Activated CD8-positive, alpha-beta T cell treated with anti-CD3 and anti-CD28 coated beads for 36 hours (primary cell): ENCODE measurements at regions of chr4 and their contacts with region 1.

Region 1: DNA sequence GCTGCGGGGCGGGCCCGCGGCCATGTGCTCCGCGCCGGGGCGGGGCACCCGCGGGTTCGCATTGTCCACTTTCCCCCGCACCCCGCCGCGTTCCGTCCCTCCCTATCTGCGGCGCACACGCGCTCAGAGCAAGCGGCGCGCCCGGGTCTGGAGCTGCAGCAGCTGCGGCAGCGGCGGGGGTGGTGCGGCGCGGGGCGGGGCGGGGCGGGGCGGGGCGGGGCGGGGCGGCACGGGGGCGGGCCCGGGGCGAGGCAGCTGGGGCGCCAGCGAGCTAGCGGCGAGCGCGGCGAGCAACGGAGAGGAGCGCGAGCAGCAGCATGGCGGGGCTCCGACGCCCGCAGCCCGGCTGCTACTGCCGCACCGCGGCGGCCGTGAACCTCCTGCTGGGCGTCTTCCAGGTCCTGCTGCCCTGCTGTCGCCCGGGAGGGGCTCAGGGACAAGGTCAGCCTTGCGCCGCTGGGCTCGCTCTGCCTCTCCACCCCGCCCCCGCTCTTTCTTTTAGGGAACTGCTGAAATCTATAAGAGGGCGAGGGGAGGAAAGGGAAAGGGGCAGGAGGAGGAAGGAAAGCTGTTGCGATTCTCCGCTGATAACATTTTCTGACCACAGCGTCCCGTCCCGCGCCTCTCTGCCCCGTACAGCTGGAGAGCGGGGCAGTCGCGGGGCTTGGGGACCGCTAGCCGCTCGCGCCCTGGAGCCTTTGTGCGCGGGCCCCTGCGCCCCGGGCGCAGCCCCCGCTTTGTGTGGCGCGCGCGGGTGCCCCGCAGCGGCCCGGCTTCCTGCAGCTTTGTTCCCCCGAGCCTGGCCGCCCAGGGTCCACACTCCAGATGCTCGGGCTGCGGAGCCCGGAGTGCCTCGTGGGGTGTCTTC is at the start of gene TMEM131L:
- DNase-seq: peak; percentile 64
- ATAC-seq: peak; percentile 70
- H3K4me3 Mint-ChIP-seq: peak within 1 kb of the TSS; percentile 98
- H3K27ac Mint-ChIP-seq: peak within 1 kb of the TSS; percentile 88
- H3K4me1 Mint-ChIP-seq: peaks cover 31% of the 10 kb centered on the region
- H3K27me3 Mint-ChIP-seq: no peaks in the 10 kb centered on the region
- CTCF ChIP-seq: no peak
- total RNA-seq, gene TMEM131L: 51.7 to 52.4 TPM

Region 2: GRCh38 chr4:153344131-153345010 is 121.9 kb before region 1 on chr4 and contains the start of gene MND1:
- CTCF ChIA-PET with region 1: interaction called, 26 read pairs
- POLR2A ChIA-PET with region 1: interaction called, 5 read pairs
- intact Hi-C with region 1: no loop called
- DNase-seq: peak; percentile 94
- ATAC-seq: peak; percentile 94
- H3K4me3 Mint-ChIP-seq: peak within 1 kb of the TSS; percentile 93
- H3K27ac Mint-ChIP-seq: peak within 1 kb of the TSS; percentile 87
- H3K4me1 Mint-ChIP-seq: peaks cover 24% of the 10 kb centered on the region
- H3K27me3 Mint-ChIP-seq: peaks cover 12% of the 10 kb centered on the region
- CTCF ChIP-seq: peak; percentile 100
- total RNA-seq, gene MND1: 48.0 to 50.0 TPM

Region 3: DNA sequence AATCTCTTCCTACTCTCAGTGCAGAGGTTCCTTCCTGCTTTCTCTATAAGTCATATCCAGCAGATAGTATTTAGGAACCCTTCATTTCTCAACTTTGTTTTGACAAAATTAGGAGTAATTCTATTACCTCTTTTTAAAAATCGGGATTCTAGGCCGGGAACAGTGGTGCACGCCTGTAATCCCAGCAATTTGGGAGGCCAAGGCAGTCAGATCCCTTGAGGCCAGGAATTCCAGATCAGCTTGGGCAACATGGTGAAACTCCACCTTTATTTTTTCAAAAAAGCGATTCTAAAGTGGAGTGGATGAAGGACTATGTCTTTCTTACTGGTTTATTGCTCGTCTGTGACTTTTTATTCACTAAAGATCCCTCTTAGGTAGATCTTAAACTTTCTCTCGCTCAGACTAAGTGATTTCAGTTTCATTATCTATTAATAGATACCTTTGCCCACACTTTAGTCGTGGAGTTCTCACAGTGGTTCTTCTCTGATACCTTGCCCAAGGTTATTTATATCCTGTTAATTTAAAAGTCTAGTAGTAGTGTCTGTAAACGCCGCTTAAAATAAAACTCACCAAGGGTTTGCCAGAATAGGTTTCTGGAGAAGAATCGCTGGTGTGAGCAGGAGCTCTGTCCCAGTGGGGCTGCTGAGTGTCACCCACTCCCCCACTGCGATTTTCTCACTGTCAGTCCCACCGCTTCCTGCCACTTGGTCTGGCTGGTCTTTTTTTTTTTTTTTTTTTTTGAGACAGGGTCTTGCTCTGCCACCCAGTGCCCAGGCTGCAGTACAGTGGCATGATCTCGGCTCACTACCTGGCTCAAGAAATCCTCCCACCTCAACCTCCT is 27.2 kb before region 1 on chr4:
- CTCF ChIA-PET with region 1: interaction called, 23 read pairs
- POLR2A ChIA-PET with region 1: interaction called, 10 read pairs
- intact Hi-C with region 1: loop called (anchors 5 kb)
- DNase-seq: peak; percentile 57
- ATAC-seq: peak; percentile 83
- H3K4me3 Mint-ChIP-seq: peak overlapping the region; percentile 80
- H3K27ac Mint-ChIP-seq: peak overlapping the region; percentile 92
- H3K4me1 Mint-ChIP-seq: peaks cover 50% of the 10 kb centered on the region
- H3K27me3 Mint-ChIP-seq: no peaks in the 10 kb centered on the region
- CTCF ChIP-seq: no peak

Region 4: DNA sequence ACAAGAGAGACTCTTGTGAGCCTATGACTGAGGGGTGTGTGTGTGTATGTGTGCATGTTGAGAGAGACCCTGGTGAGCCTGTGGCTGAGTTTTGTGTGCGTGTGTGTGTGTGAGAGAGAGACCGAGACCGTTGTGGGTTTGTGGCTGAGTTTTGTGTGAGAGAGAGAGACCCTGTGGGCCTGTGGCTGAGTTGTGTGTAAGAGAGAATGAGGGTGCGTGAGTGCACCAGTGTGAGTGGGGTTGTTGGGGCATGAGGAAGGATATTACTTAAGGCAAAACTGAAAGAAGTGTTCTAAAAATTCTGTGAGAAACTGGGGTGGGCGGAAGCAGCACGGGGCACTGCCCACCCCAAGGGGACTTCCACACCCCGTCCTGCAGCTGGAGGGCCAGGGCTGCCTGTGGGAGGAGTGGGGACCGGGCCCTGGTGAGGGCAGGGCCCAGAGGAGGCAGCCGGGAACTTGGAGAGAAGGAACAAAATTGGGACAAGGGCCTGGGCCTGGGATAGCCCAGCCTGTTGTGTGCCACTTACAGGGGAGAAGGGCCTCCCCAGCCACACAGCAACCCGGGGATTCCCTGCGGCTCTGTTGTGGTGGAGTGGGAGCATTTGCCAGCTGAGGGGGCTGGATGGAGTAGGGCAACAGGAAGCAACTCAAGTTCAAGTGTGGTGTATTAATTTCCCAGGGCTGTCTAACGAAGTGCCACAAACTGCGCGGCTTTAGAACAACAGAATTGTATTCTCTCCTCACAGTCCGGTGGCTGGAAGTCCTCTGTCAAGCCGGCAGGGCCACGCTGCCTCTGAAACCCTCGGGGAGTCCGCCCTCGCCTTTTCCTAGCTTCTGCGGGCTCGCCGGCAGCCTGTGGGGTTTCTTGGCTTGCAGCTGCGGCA is 21.9 kb after region 1 on chr4:
- CTCF ChIA-PET with region 1: interaction called, 24 read pairs
- POLR2A ChIA-PET with region 1: interaction called, 36 read pairs
- intact Hi-C with region 1: loop called (anchors 2 kb)
- DNase-seq: peak; percentile 91
- ATAC-seq: peak; percentile 64
- H3K4me3 Mint-ChIP-seq: peak overlapping the region; percentile 69
- H3K27ac Mint-ChIP-seq: peak overlapping the region; percentile 95
- H3K4me1 Mint-ChIP-seq: peaks cover 64% of the 10 kb centered on the region
- H3K27me3 Mint-ChIP-seq: no peaks in the 10 kb centered on the region
- CTCF ChIP-seq: no peak

Region 5: DNA sequence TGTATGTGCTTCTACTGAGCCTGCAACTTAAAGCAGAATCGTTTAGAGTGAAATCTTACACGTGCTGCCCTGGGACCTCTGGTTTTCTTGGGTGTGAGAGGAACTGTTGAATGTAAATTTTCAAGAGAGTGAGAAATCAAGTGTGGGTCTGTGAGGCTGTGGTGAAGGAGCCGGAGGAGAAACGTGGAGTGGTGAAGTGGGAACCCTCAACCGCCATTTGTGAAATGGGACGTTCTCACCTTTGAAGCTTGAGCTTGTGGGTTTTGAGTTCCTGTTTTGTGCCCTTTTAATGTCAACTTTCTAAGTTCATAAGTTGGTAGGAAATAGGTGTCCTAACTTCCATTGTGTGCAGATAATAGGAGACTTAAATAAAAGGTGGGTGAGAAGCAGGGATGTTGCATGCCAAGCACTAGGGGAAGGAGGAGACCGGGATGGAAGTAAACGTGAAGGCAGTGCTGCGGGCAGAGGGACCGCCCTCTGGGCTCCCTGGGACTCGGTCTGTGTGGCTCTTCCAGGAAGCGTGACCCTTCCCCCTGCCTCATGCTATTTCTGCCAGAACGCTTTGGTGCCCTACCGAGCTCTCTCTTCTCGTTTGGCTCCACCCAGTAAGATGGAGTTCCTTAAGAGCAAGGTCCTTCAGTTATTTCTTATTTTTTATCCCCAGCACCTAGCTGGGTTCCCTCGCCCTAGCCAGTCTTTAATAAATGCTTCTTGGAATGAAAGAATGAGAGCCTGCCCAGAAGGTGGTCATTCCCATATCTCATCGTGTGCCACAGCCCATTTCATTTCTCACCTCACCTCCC is 55.9 kb after region 1 on chr4:
- CTCF ChIA-PET with region 1: interaction called, 11 read pairs
- POLR2A ChIA-PET with region 1: interaction called, 7 read pairs
- intact Hi-C with region 1: loop called (anchors 2 kb)
- DNase-seq: peak; percentile 90
- ATAC-seq: peak; percentile 82
- H3K4me3 Mint-ChIP-seq: peak overlapping the region; percentile 66
- H3K27ac Mint-ChIP-seq: peak overlapping the region; percentile 96
- H3K4me1 Mint-ChIP-seq: peaks cover 88% of the 10 kb centered on the region
- H3K27me3 Mint-ChIP-seq: no peaks in the 10 kb centered on the region
- CTCF ChIP-seq: no peak

Region 6: DNA sequence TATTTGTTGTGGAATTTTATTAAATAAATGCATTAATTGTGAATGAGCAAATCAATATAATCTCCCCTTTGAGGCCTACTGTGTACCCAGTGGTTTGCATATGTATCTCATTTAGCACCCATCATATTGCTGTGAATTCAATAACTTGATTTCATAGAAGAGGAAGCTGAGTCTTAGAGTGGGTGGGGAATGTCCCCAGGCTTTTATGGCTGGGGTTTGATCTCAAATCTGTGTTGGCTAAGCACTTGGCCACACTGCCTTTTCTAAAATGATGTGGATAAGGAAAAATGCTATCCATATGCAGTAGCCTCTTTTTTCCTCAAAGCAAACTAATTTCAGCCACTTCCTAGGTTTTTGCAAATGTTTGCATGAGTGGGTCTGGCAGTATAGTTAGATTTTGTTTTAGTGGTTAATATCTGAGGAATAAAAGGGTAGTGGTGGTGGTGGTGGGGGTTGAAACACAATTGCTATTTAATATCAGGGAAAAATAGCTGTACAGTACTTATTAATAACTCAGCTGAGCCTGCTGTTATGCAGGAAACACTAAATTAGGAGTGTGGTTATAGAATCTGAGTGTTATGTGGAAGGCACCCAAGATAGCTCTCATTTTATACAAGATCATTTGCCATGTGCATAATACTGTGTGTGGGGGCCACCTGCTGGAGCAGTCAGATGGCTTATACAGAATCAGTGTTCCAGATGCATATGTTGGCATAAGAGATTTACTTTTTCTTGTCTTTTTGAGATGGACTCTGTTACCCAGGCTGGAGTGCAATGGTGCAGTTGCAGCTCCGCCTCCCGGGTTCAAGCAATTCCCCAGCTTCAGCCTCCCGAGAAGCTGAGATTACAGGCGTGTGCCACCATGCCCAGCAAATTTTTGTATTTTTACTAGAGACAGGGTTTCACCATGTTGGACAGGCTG is 107.8 kb after region 1 on chr4:
- CTCF ChIA-PET with region 1: interaction called, 23 read pairs
- POLR2A ChIA-PET with region 1: interaction called, 30 read pairs
- intact Hi-C with region 1: loop called (anchors 1 kb)
- DNase-seq: peak; percentile 80
- ATAC-seq: peak; percentile 81
- H3K4me3 Mint-ChIP-seq: no peak overlapping the region
- H3K27ac Mint-ChIP-seq: peak overlapping the region; percentile 80
- H3K4me1 Mint-ChIP-seq: peaks cover 72% of the 10 kb centered on the region
- H3K27me3 Mint-ChIP-seq: no peaks in the 10 kb centered on the region
- CTCF ChIP-seq: peak; percentile 66